ENCODE measurements at regions of chr15 and their contacts with region 1.

Region 1: GRCh38 chr15:63374686-63375520 is 6.7 kb downstream of the CA12 start:
- DNase-seq: peak; percentile 73
- ATAC-seq: peak; percentile 25
- H3K4me3 Mint-ChIP-seq: peak overlapping the region; percentile 15
- H3K27ac Mint-ChIP-seq: peak overlapping the region; percentile 67
- H3K4me1 Mint-ChIP-seq: peaks cover 51% of the 10 kb centered on the region
- H3K27me3 Mint-ChIP-seq: peaks cover 24% of the 10 kb centered on the region

Region 2: GRCh38 chr15:63079938-63080626 is 294.8 kb before region 1 on chr15:
- CTCF ChIA-PET with region 1: no interaction called
- POLR2A ChIA-PET with region 1: no interaction called
- intact Hi-C with region 1: no loop called
- DNase-seq: no peak
- ATAC-seq: no peak
- H3K4me3 Mint-ChIP-seq: no peak overlapping the region
- H3K27ac Mint-ChIP-seq: no peak overlapping the region
- H3K4me1 Mint-ChIP-seq: no peaks in the 10 kb centered on the region
- H3K27me3 Mint-ChIP-seq: peaks cover 6% of the 10 kb centered on the region

Region 3: GRCh38 chr15:63256433-63257274 is 118.2 kb before region 1 on chr15:
- CTCF ChIA-PET with region 1: no interaction called
- POLR2A ChIA-PET with region 1: no interaction called
- intact Hi-C with region 1: no loop called
- DNase-seq: no peak
- ATAC-seq: no peak
- H3K4me3 Mint-ChIP-seq: no peak overlapping the region
- H3K27ac Mint-ChIP-seq: no peak overlapping the region
- H3K4me1 Mint-ChIP-seq: peaks cover 27% of the 10 kb centered on the region
- H3K27me3 Mint-ChIP-seq: no peaks in the 10 kb centered on the region

Region 4: DNA sequence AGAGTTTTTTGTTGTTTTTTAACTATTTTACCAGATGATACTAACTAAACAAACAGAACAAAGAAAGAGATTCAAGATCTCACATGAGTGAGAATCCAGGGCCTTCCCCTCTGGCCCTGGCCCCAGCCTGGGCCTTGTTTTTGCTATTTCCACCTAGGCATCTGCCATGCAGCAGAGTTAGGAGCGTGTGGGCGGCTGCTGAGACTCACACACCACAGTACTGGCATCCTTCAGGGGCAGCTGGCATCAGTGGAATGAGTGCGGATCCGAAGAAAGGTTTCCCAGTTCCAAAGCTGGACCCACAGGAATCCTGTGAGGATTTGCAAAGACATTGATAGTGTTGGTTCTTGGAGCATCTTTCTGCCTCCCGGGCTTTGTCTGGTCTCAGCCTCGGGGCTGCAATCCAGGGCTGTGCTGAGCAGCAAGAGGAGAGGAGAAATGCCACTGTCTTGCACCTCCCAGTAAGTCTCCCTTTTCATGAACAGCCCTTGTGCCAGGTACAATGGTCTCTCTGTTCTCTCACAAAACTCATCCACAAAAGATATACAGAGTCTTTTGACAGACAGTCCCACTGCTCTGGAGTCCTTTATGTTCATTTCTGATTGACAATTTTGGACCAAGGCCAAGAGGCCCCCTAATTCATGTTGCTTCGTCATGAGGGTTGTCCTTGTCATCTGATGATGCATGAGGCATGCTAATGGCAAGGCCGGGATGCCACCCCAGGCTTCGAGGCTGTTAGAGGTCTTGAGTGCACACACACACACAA is 50.9 kb before region 1 on chr15:
- CTCF ChIA-PET with region 1: interaction called, 5 read pairs
- POLR2A ChIA-PET with region 1: no interaction called
- intact Hi-C with region 1: loop called in 1 of 2 experiments (anchors 2 kb)
- DNase-seq: peak; percentile 51
- ATAC-seq: peak; percentile 50
- H3K4me3 Mint-ChIP-seq: no peak overlapping the region
- H3K27ac Mint-ChIP-seq: no peak overlapping the region
- H3K4me1 Mint-ChIP-seq: peaks cover 16% of the 10 kb centered on the region
- H3K27me3 Mint-ChIP-seq: no peaks in the 10 kb centered on the region